ENCODE measurements at regions of chr17 and their contacts with region 1.

Region 1: DNA sequence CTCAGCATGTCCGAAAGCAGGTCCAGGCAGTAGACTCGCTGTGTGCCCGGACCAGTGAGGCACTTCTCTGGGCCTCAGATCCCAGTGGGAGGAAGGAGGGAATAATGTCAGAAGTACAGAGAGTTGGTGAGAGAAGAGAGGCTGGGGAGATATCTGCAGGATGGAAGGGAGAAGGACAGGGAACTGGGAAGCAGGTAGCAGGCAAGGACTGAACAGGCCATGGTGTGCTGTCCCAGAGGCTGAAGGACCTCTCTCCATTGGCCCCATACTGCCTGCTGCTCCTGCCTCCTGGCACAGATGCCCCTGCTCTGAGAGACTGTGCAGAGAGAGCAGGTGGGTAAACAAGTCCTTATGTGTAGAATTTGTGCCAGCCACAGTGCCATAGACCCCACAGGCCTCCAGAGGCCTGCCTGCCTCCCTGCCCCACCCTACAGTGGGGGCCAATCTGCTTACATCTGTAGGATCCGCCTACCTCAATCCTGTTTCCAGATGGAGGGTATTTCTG is 34.2 kb upstream of the CRHR1 start:
- DNase-seq: peak in 1 of 6 donors; percentile 24
- ATAC-seq: peak in 3 of 4 donors; percentile 60 to 84 (median 82)
- H3K4me3 ChIP-seq: no peak overlapping the region
- H3K27ac ChIP-seq: no peak overlapping the region
- H3K4me1 ChIP-seq: no peaks in the 10 kb centered on the region
- H3K27me3 ChIP-seq: no peaks in the 10 kb centered on the region
- CTCF ChIP-seq: no peak

Region 2: DNA sequence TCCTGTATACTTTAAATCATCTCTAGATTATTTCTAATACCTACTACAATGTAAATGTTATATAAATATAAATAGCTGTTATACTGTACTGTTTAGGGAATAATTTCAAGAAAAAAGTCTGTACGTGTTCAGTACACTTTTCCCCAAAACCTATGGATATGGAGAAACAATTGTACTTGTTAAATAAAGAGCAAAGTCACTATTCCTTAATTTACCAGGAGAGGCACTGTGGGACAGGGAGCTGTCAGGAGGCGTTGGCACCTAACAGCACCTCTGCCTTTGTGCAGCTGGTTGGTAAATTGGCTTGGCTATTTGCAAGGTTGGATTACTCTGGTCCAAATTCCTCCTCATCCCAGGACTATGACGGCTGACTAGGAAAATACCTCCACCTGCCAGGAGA is 62.2 kb after region 1 on chr17:
- intact Hi-C with region 1: loop called in 1 of 3 experiments (anchors 5 kb)
- DNase-seq: no peak
- ATAC-seq: no peak
- H3K4me3 ChIP-seq: no peak overlapping the region
- H3K27ac ChIP-seq: no peak overlapping the region
- H3K4me1 ChIP-seq: no peaks in the 10 kb centered on the region
- H3K27me3 ChIP-seq: no peaks in the 10 kb centered on the region
- CTCF ChIP-seq: no peak